Body of pancreas (tissue), 4 donors: ENCODE measurements at regions of chr1 and their contacts with region 1.

Region 1: GRCh38 chr1:2194898-2195673 is 514 bp upstream of the FAAP20 start:
- DNase-seq: peak; percentile 86 to 90 (median 89)
- ATAC-seq: peak; percentile 73
- H3K4me3 ChIP-seq: peak overlapping the region; percentile 24 to 40
- H3K27ac ChIP-seq: peak overlapping the region; percentile 77 to 100 (median 86)
- H3K4me1 ChIP-seq: peaks cover 68% of the 10 kb centered on the region
- H3K27me3 ChIP-seq: no peaks in the 10 kb centered on the region
- CTCF ChIP-seq: peak; percentile 76 to 98 (median 97)
- POLR2A ChIP-seq: peak in 2 of 3 donors; percentile 30 to 51

Region 2: DNA sequence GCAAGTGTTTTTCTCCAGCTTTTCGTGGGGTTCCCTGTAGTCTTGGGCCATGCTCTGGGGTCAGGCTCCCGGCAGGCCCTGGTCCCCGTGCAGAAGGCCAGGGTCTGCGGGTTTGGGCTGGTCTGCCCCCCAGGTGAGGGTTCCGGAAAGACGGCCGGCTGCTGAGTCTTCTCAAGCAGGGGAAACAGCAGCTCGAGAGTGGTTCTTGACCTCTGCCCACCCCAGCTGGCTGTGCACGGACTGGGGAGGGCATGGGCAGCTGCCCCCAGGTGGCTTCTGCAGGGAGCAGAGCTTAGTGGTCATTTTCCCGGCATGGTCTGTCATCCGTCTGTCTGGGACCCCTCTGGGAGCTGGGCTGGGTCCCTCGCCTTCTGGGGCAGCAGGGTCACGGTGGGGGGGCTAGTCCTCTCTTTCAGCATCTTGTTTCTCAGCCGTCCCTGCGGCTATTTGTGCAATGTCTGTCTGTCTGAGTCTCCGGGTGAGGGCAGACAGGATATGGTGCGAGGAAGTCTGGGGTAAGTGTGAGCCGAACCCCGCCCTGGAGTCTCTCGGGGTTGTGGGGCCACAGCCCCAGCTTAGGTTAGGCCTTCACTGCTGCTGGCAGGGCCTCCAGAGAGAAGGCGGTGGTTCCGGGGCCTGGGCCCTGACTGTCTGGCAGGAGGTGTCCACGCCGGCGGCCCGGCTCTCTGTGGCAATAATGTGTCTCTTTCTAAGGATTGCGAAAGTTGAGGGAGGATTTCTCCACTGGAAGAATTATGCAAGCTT is 39.1 kb after region 1 on chr1:
- intact Hi-C with region 1: loop called (anchors 5 kb)
- DNase-seq: peak; percentile 59 to 89 (median 74)
- ATAC-seq: peak; percentile 55
- H3K4me3 ChIP-seq: no peak overlapping the region
- H3K27ac ChIP-seq: peak overlapping the region in 3 of 4 donors; percentile 56 to 76 (median 74)
- H3K4me1 ChIP-seq: peaks cover 99% of the 10 kb centered on the region
- H3K27me3 ChIP-seq: no peaks in the 10 kb centered on the region
- CTCF ChIP-seq: no peak
- POLR2A ChIP-seq: peak in 2 of 3 donors; percentile 7 to 52

Region 3: DNA sequence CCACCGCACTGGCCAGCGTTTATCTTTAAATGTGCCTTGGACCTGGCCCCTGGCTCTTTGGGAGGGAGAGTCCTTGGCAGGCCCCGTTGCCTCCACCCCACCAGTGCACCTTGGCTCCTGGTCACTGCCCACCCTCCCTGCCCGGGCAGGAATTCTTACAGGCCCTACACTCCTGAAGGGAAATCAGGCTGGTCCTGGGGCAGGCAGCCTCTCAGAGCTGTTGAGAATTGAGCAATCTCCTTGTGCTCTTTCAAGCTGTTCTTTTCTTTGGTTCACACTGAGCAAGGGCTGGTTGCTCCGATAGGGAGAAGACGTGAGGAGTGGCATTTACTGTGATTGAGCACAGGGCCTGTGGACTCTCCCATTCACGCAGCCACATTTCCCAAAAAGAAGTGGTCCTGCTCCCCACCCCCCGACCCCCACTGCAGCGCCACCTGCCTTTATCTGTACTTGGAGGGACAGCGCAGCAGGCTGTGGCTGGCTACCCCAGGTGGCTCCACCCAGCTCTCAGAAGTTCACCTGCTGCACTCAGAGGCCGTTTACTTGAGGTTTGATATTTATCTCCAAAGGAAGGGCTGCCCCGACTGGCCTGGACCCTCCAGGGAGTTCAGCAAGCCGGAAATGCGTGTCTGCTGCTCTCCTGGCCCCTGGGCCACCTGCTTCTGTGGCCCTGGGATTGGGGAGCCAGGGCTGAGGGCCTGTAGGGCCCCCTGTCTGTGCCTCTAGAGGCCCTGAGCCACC is 80.9 kb after region 1 on chr1:
- intact Hi-C with region 1: no loop called
- DNase-seq: no peak
- ATAC-seq: peak; percentile 28
- H3K4me3 ChIP-seq: no peak overlapping the region
- H3K27ac ChIP-seq: peak overlapping the region in 2 of 4 donors; percentile 14 to 37
- H3K4me1 ChIP-seq: peaks cover 56% of the 10 kb centered on the region
- H3K27me3 ChIP-seq: no peaks in the 10 kb centered on the region
- CTCF ChIP-seq: no peak
- POLR2A ChIP-seq: no peak

Region 4: DNA sequence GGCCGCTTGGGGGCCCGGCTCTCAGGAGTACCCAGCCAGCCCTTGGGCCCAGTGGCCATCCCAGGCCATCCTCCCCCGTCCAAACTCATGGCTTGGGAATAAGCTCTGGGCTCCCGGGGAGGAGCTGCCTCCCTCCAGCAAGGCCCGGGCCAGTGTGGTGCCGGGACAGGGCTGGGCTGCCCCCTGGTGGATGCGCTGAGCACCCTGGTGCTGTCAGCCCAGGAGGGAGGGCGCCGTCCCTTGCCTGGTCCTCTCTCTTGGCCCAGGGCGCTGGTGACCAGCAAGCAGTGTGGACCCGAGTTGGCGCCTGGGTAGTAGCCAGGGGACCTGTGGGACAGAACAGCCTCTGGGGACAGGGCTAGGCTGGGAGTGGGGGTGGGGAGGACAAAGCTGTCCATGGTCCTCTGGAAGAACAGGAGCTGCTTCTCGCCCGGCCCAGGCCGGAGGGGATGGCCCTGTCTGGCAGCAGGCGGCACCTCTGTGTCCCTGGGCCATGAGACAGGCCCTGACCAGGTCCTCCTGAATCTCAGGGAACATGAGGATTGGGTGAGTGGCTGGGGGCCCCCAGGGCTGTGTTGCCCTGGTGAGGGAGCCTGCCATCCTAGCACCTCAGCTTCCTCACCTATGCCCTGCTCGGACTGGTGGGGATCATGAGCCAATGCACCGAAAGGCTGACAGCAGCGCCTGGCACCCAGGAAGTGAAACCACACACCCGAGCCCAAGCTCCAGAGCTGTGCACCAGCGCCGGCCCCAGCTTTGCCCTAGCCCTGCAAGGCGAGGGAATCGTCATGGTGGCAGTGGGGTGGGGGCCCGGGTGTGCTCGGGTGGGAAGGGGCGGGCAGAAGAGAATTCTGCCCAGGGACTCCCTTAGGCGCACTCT is 186.9 kb after region 1 on chr1:
- intact Hi-C with region 1: loop called (anchors 5 kb)
- DNase-seq: peak; percentile 78 to 82 (median 80)
- ATAC-seq: peak; percentile 88
- H3K4me3 ChIP-seq: no peak overlapping the region
- H3K27ac ChIP-seq: no peak overlapping the region
- H3K4me1 ChIP-seq: peaks cover 7% of the 10 kb centered on the region
- H3K27me3 ChIP-seq: no peaks in the 10 kb centered on the region
- CTCF ChIP-seq: peak; percentile 85 to 93 (median 91)
- POLR2A ChIP-seq: no peak